H1 (cell line): ENCODE measurements at regions of chr20 and their contacts with region 1.

Region 1: DNA sequence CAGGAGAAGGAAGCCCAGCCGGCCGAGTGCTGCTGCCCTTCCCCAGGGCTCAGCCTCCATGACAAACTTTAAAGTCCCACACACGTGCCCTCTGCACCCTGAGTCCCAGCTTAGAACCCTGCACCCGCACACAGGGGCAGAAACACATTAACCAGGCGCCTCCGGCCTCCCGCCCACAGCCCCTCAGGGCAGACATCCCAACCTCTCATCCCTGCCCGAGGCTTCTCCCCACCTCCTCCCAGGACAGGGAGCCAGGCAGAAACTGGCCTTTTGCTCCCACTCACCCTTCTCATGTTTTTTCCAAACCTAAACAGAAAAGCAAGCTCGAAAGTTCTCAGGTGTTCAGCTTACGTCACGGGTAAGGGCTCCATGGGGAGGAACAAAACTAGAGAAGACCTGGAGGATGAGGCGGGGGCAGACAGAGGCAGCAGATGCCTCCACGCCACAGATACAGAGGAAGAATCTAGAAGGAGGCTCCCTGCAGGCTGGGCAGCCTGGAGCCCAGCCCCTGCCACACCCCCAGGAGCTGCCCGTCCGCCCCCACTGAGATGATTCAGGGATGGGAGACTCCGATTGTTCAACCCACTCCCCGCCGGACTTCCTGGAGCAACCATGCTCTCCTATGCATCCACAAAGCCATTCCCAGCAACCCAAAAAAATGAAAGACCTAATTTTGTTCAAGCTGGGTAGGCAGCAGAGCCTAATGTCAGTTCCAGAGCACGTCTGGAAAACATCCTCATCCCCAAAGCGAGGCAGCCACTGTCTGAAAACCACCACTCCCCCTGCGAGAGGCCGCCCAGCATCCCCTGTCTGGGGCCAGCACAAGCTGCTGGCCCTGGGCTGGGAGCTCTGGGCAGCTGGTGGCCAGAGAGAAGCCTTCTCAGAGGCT is 8.8 kb downstream of the KCNQ2 start:
- DNase-seq: no peak
- H3K4me3 ChIP-seq: no peak overlapping the region
- H3K27ac ChIP-seq: no peak overlapping the region
- H3K4me1 ChIP-seq: peaks cover 0 to 4% (median 3%) of the 10 kb centered on the region in 4 experiments; a peak in 5 of 7 replicates
- H3K27me3 ChIP-seq: no peaks in the 10 kb centered on the region
- CTCF ChIP-seq: no peak
- EP300 ChIP-seq: no peak
- POLR2A ChIP-seq: no peak
- RAD21 ChIP-seq: no peak

Region 2: GRCh38 chr20:63442100-63442493 is 21.5 kb before region 1 on chr20:
- CTCF ChIA-PET with region 1: interaction called, 11 read pairs
- POLR2A ChIA-PET with region 1: interaction called, 10 read pairs
- DNase-seq: peak in 1 of 2 experiments; percentile 79
- H3K4me3 ChIP-seq: no peak overlapping the region
- H3K27ac ChIP-seq: no peak overlapping the region
- H3K4me1 ChIP-seq: peaks cover 0 to 5% (median 1%) of the 10 kb centered on the region in 4 experiments; a peak in 2 of 7 replicates
- H3K27me3 ChIP-seq: no peaks in the 10 kb centered on the region
- CTCF ChIP-seq: peak; percentile 59 to 76 (median 59)
- EP300 ChIP-seq: no peak
- POLR2A ChIP-seq: no peak
- RAD21 ChIP-seq: peak; percentile 57 to 72

Region 3: GRCh38 chr20:63475206-63475605 is 11.6 kb after region 1 on chr20:
- CTCF ChIA-PET with region 1: interaction called, 15 read pairs
- POLR2A ChIA-PET with region 1: interaction called, 10 read pairs
- DNase-seq: no peak
- H3K4me3 ChIP-seq: no peak overlapping the region
- H3K27ac ChIP-seq: no peak overlapping the region
- H3K4me1 ChIP-seq: peaks cover 0 to 21% (median 8%) of the 10 kb centered on the region in 4 experiments; a peak in 6 of 7 replicates
- H3K27me3 ChIP-seq: peaks cover 0 to 16% (median 5%) of the 10 kb centered on the region in 4 experiments; a peak in 4 of 7 replicates
- CTCF ChIP-seq: no peak
- EP300 ChIP-seq: no peak
- POLR2A ChIP-seq: no peak
- RAD21 ChIP-seq: 0 out of 4 replicates have a peak, but pooled peaks of 1 of the 2 experiments have one; percentile 5

Region 4: DNA sequence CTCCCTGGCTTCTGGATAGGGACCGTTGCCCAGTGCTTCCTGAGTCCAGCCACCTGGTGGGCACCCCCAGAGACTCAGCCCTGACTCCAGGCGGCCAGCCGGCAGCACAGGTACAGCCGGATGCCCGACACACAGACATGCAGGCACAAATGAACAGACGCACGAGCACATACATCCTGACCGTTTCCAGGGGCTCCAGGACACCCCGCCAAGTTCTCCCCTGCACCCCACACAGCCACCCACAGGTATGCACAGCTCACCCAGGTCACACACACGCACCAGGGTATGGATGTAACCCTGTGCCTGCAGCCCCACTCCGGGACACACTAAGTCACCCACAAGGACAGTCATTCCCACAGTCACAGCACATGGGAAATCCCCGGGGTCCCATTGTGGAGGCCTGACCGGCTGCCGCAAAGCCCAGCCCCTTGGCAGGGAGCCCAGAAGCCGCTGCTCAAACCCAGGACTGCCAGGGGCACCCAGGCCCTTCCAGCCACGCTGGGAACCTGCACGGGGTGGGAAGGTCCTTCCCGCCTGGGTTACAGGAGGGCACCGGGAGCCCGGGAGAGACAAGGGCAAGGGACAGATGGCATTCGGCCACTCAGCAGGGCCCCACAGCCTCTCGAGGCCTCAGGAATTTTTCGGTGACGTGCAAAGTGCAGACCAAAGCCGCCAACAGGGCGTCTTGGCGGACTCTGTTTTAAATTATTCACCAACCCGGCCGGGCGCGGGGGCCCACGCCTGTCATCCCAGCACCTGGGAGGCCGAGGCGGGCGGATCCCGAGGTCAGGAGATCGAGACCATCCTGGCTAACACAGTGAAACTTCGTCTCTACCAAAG is 19.4 kb after region 1 on chr20:
- CTCF ChIA-PET with region 1: interaction called, 15 read pairs
- POLR2A ChIA-PET with region 1: interaction called, 7 read pairs
- DNase-seq: no peak
- H3K4me3 ChIP-seq: no peak overlapping the region
- H3K27ac ChIP-seq: no peak overlapping the region
- H3K4me1 ChIP-seq: peaks cover 0 to 24% (median 13%) of the 10 kb centered on the region in 4 experiments; a peak in 5 of 7 replicates
- H3K27me3 ChIP-seq: peaks cover 0 to 7% (median 4%) of the 10 kb centered on the region in 4 experiments; a peak in 4 of 7 replicates
- CTCF ChIP-seq: no peak
- EP300 ChIP-seq: no peak
- POLR2A ChIP-seq: no peak
- RAD21 ChIP-seq: no peak